Psoas muscle (tissue), 8 donors: ENCODE measurements at regions of chr22 and their contacts with region 1.

Region 1: GRCh38 chr22:18119409-18120110 is 9.0 kb downstream of the TUBA8 start:
- DNase-seq: peak; percentile 69 to 90
- ATAC-seq: peak; percentile 84 to 88 (median 86)
- H3K4me3 ChIP-seq: peak overlapping the region; percentile 18
- H3K27ac ChIP-seq: peak overlapping the region; percentile 92
- H3K4me1 ChIP-seq: peaks cover 74% of the 10 kb centered on the region
- H3K27me3 ChIP-seq: no peaks in the 10 kb centered on the region
- CTCF ChIP-seq: no peak

Region 2: DNA sequence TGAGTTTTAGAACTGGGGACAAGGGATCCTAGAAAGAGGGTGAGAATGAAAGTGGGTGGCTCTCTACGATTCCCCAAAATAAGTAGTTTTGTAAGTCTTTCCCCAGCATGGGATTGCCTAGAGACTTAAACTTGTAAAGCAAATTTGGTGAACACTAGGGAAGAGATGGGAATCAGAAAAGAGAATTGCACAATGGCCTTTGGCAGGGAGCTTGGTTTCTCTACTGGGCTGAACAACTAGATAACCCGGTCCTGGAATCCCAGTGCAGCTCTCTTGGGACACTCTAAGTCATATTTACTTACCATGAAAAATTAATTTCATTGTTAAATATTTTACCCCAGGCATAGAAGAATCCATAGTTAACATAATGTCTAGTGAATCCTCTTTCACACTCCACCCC is 13.9 kb after region 1 on chr22:
- intact Hi-C with region 1: loop called in 1 of 2 experiments (anchors 1 kb)
- DNase-seq: no peak
- ATAC-seq: peak in 3 of 4 donors; percentile 39 to 62 (median 39)
- H3K4me3 ChIP-seq: no peak overlapping the region
- H3K27ac ChIP-seq: no peak overlapping the region
- H3K4me1 ChIP-seq: no peaks in the 10 kb centered on the region
- H3K27me3 ChIP-seq: no peaks in the 10 kb centered on the region
- CTCF ChIP-seq: no peak